ENCODE measurements at regions of chrX and their contacts with region 1.

Region 1: GRCh38 chrX:47523297-47523696 is 37.7 kb upstream of the ARAF start:
- DNase-seq: peak; percentile 49
- H3K27ac ChIP-seq: peak overlapping the region; percentile 64
- CTCF ChIP-seq: peak; percentile 76

Region 2: GRCh38 chrX:47497273-47497672 is 26.0 kb before region 1 on chrX:
- CTCF ChIA-PET with region 1: interaction called, 20 read pairs
- POLR2A ChIA-PET with region 1: no interaction called
- DNase-seq: peak; percentile 27
- H3K27ac ChIP-seq: no peak overlapping the region
- CTCF ChIP-seq: peak; percentile 46